Activated CD8-positive, alpha-beta T cell treated with anti-CD3 and anti-CD28 coated beads for 36 hours (primary cell): ENCODE measurements at regions of chr5 and their contacts with region 1.

Region 1: DNA sequence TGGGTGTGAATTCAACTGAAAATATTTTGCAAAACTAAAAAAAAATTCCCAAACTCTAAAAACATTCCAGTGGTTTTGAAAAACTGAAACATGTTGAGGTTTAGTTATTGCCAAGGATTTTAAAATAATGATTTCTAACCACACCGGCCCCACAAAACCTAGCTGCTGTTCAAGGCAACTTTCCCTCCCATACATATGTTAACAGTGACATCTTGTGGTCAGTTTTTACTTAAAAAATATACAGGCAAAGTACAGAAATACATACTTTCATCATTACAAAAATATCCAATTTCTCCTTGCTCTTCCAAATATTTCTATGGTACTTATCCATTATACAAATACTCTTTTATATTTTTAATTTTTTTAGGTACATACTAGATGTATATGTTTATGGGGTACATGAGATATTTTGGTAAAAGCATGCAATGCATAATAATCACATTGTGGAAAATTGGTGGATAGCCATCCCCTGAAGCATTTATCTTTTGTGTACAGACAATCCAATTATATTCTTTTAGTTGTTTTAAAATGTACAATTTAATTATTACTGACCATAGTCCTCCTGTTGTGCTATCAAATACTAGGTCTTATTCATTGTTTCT is 34.4 kb upstream of the MRPS30 start:
- DNase-seq: no peak
- ATAC-seq: no peak
- H3K4me3 Mint-ChIP-seq: no peak overlapping the region
- H3K27ac Mint-ChIP-seq: no peak overlapping the region
- H3K4me1 Mint-ChIP-seq: no peaks in the 10 kb centered on the region
- H3K27me3 Mint-ChIP-seq: peaks cover 11% of the 10 kb centered on the region
- CTCF ChIP-seq: peak; percentile 48

Region 2: DNA sequence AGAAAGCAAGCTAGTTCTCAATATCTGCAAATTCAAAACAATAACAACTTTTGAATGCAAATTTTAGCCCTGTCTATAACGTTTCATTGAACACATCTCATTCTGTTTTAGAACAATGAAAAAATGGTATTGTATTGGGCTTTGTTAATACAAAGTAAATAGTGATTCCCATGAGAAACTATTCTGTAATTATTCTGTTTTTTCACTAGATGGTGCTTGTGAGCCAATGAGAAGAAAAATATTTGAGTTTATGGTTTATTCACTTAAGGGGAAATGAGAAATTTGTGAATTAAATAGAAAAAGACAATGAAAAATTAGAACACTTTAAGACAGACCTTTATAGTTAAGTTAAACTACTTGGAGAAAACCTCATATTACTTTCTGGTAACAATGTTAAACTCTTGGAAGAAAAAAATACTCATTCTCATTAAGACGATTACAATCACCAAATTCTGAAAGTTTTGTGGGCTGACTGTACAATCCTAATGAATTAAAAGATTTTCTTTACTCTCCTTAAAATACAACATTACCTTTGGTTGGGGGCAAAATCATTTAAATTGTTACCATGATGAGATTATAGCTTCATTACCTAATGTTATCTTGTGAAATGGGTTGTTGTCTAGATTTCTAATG is 1044.4 kb before region 1 on chr5:
- CTCF ChIA-PET with region 1: no interaction called
- POLR2A ChIA-PET with region 1: no interaction called
- intact Hi-C with region 1: loop called (anchors 5 kb)
- DNase-seq: no peak
- ATAC-seq: no peak
- H3K4me3 Mint-ChIP-seq: no peak overlapping the region
- H3K27ac Mint-ChIP-seq: no peak overlapping the region
- H3K4me1 Mint-ChIP-seq: no peaks in the 10 kb centered on the region
- H3K27me3 Mint-ChIP-seq: peaks cover 2% of the 10 kb centered on the region
- CTCF ChIP-seq: peak; percentile 74

Region 3: DNA sequence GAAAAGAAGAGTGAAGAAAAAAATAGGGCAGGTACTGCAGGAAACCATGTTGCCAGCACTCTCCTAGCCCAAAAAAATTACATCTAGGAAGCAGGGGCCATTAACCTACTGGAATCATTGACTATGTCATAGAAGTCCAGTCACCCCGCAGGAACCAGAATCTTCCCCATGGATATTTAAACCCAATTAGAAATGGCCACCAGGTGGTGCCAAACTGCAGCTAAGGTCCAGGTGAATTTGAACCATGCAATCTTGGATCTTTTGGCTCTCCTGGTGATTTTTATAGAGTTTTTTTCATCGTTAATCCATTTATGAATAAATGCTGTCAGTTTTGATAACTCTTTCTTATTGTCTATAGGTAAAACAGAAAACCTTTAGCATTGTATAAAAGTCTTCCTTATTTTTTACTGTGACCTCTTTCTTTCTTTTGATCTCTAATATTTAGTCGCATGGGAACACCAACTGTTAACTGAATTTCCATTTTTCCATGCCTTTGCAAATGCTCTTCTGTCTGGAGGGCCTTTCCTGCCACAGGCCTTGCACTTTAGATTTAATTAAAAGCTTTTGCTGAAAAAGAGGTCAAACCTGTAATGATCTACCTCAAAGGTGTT is 237.6 kb before region 1 on chr5:
- CTCF ChIA-PET with region 1: interaction called, 4 read pairs
- POLR2A ChIA-PET with region 1: no interaction called
- intact Hi-C with region 1: loop called (anchors 10 kb)
- DNase-seq: peak; percentile 25
- ATAC-seq: no peak
- H3K4me3 Mint-ChIP-seq: no peak overlapping the region
- H3K27ac Mint-ChIP-seq: no peak overlapping the region
- H3K4me1 Mint-ChIP-seq: no peaks in the 10 kb centered on the region
- H3K27me3 Mint-ChIP-seq: no peaks in the 10 kb centered on the region
- CTCF ChIP-seq: peak; percentile 71